ENCODE measurements at regions of chr14 and their contacts with region 1.

Region 1: GRCh38 chr14:34982417-34983147 is at the start of gene SRP54:
- DNase-seq: peak; percentile 93 to 99
- H3K4me3 ChIP-seq: peak within 1 kb of the TSS; percentile 79 to 91
- H3K27ac ChIP-seq: peak within 1 kb of the TSS; percentile 94 to 99
- H3K4me1 ChIP-seq: peaks cover 0 to 37% of the 10 kb centered on the region in 2 donors
- H3K27me3 ChIP-seq: no peaks in the 10 kb centered on the region
- CTCF ChIP-seq: no peak
- total RNA-seq, gene SRP54: 87.7 TPM

Region 2: GRCh38 chr14:34087556-34087955 is 895.0 kb before region 1 on chr14:
- intact Hi-C with region 1: no loop called
- DNase-seq: no peak
- H3K4me3 ChIP-seq: no peak overlapping the region
- H3K27ac ChIP-seq: no peak overlapping the region
- H3K4me1 ChIP-seq: no peaks in the 10 kb centered on the region
- H3K27me3 ChIP-seq: no peaks in the 10 kb centered on the region
- CTCF ChIP-seq: no peak

Region 3: DNA sequence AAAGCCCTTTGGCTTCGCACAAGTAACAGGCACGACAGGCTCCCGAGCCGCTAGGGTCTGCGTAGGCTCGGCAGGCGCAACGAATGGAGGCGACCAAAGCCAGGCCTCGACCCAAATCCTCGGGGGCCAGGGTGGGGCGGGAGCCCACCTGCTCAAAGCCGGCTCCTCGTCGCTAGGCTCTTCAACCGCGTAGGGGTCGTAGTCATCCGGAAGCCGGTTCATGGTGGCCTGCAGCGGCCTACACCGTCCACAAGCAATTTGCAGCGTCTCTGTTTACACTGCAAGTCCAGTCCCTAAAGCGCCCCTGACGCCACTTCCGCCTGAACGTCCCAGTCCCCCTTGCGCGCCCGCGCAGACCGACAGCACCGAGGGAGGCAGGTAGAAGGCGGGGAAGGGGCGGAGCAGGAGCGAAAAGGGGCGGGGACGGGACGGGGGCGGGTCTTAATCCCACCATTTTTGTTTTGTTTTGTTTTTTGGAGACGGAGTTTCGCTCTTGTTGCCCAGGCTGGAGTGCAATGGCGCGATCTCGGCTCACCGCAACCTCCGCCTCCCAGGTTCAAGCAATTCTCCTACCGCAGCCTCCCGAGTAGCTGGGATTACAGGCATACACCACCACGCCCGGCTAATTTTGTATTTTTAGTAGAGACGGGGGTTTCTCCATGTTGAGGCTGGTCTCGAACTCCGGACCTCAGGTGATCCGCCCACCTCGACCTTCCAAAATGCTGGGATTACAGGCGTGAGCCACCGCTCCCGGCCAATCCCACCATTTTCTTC is 443.0 kb before region 1 on chr14 and contains the start of gene EAPP:
- intact Hi-C with region 1: loop called (anchors 10 kb)
- DNase-seq: peak; percentile 96 to 99
- H3K4me3 ChIP-seq: peak within 1 kb of the TSS; percentile 75 to 86
- H3K27ac ChIP-seq: peak within 1 kb of the TSS; percentile 92
- H3K4me1 ChIP-seq: peaks cover 2 to 3% of the 10 kb centered on the region in 2 donors
- H3K27me3 ChIP-seq: no peaks in the 10 kb centered on the region
- CTCF ChIP-seq: no peak
- total RNA-seq, gene EAPP: 10.1 TPM

Region 4: DNA sequence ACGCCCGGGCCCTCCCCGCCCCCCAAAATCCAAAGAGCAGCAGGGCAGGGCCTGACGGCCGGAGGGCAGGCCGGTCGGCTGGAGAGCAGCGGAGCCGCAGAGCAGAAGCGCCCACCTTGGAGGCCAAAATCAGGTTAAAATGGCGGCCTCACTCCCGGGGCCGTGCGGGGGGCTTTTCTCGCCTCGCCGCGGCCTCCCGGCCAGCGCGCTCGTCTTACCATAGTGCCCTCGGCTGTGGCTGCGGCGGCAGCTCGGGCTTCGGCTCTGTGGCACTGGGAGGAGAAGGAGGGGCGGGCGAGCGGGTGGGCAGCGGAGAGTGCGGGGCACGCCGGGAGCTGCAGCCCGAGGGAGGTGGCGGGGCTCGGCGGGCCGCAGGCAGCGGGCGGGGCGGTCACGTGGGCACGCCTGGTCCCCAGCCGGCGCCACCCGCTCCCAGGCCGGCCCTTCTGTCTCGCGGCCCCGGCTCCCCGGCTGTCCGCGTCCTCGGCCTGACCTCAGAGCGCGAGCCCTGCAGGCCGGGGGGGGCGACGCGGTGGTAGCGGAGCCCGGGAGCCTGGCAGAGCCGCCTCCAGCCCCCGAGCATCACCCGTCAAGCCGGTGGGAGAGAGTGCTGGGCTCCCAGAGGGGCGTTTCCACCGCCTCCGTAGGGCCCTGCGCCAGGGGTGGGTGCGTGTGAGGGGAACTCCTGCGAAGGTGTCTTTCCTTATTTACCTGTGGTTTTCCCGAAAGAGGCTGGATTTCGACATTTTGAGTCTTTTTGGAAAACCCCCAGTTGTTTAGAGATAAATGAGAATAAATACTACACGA is 268.1 kb before region 1 on chr14 and contains the start of gene CFL2:
- intact Hi-C with region 1: loop called (anchors 2 kb)
- DNase-seq: peak; percentile 55 to 91
- H3K4me3 ChIP-seq: peak within 1 kb of the TSS; percentile 75 to 85
- H3K27ac ChIP-seq: peak within 1 kb of the TSS; percentile 88 to 99
- H3K4me1 ChIP-seq: peaks cover 0 to 23% of the 10 kb centered on the region in 2 donors
- H3K27me3 ChIP-seq: no peaks in the 10 kb centered on the region
- CTCF ChIP-seq: no peak
- total RNA-seq, gene CFL2: 49.0 TPM

Region 5: GRCh38 chr14:35046048-35046741 is 63.6 kb after region 1 on chr14 and contains the start of gene FAM177A1:
- intact Hi-C with region 1: loop called (anchors 1 kb)
- DNase-seq: peak; percentile 97 to 100
- H3K4me3 ChIP-seq: peak within 1 kb of the TSS; percentile 81 to 89
- H3K27ac ChIP-seq: peak within 1 kb of the TSS; percentile 99
- H3K4me1 ChIP-seq: peaks cover 0 to 14% of the 10 kb centered on the region in 2 donors
- H3K27me3 ChIP-seq: no peaks in the 10 kb centered on the region
- CTCF ChIP-seq: no peak
- total RNA-seq, gene FAM177A1: 35.1 TPM

Region 6: DNA sequence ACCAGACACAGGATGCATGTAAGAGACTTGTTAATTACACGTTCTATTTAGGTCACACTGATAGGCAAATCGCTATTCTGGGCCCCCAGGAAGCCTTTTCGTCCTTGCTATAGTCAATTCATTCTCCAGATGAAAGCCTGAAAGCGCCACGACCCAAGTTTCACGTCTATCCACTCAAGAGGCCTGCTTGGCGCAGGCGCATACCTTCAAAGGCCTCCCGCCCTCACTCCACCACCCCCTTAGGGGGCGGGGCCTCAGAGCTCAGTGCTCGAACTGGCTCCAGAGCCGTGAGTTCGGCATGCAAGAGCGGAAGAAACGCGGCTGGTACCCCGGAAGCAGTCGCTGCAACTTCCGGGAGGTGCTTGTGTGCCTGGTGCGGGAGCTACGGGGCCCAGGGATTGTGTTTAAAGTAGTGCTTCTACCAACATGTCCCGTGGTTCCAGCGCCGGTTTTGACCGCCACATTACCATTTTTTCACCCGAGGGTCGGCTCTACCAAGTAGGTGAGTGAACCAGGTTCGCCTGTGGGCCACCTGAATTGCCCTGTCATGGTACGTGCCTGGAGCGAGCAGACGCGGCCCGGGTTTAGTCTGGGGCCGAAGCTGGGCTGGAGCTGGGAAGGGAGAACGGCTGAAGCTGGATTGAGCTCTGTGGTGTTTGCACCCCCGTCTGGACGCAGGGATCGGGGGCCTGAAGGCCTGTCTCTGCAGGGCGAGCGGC is 309.6 kb after region 1 on chr14 and contains the start of gene PSMA6:
- intact Hi-C with region 1: loop called (anchors 2 kb)
- DNase-seq: peak; percentile 96 to 99
- H3K4me3 ChIP-seq: peak within 1 kb of the TSS; percentile 80 to 87
- H3K27ac ChIP-seq: peak within 1 kb of the TSS; percentile 83 to 92
- H3K4me1 ChIP-seq: peaks cover 0 to 22% of the 10 kb centered on the region in 2 donors
- H3K27me3 ChIP-seq: no peaks in the 10 kb centered on the region
- CTCF ChIP-seq: no peak
- total RNA-seq, gene PSMA6: 96.6 TPM

Region 7: DNA sequence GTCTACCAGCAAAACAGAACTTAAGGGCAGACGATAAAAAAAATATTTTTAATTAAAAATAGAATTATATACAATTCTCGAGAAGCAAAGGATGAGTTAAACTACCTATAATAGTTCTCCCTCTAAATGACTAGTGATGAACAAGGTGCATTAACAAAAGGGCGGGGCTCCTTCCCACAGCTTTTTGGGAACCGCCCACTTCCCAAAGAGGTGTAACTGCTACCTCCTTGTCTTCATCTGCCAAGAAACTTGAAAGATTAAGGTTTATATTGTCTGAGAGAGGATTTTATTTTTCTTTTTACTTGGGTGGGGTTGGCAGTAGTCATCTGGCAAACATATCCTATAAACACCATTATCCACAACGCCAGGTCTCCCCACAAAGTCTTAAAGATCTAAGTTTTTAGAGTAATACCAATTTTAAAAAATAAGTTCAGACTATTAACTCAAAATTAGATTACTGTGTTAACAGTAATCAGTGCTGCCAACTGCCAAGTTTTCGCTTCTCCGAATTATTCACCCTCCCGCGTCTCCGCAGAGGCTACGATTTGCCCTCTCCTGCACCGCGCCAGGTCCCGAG is 825.6 kb after region 1 on chr14:
- intact Hi-C with region 1: loop called (anchors 5 kb)
- DNase-seq: no peak
- H3K4me3 ChIP-seq: peak overlapping the region; percentile 60 to 93
- H3K27ac ChIP-seq: peak overlapping the region; percentile 87 to 97
- H3K4me1 ChIP-seq: peaks cover 0 to 16% of the 10 kb centered on the region in 2 donors
- H3K27me3 ChIP-seq: no peaks in the 10 kb centered on the region
- CTCF ChIP-seq: no peak

Measured in ascending aorta (tissue), 2 donors.